ENCODE measurements at regions of chr11 and their contacts with region 1.

Region 1: DNA sequence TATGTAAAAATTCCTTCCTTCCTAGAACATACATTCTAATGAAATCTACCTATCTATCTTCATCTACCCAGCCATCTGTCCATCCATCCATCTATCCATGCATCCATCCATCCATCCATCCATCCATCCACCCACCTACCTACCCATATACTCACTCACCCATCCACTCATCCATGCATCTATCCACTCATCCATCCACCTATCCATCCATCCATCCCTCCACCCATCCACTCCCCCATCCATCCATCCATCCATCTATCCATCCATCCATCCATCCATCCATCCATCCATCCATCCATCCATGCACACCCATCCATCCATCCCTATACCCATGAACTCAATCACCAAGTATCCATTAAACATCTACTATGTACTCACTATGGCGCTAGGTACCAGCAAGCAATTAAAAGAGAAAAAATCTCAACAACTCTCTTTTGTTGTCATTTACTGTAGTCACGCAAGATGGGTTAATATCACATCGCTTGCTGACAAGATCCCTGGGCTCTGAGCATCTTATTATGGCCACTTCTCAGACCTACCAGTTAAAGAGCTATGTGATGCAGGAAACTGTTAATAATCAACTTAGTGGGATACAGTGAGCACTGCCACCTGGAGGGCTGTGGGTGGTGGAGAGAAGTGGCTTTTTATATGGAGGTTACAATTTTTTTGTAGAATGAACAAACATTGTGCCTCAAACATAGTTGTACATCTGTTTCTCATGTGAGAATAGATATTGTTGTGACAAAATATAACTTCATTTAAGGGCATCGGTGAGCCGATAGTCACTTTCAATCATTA is 181.2 kb downstream of the TENM4 start:
- DNase-seq: no peak

Region 2: GRCh38 chr11:79314906-79315681 is 55.5 kb after region 1 on chr11:
- intact Hi-C with region 1: loop called (anchors 5 kb)
- DNase-seq: no peak

Measured in posterior cingulate gyrus (tissue), 11 donors.